Gastrocnemius medialis (tissue), 4 donors: ENCODE measurements at regions of chr16 and their contacts with region 1.

Region 1: DNA sequence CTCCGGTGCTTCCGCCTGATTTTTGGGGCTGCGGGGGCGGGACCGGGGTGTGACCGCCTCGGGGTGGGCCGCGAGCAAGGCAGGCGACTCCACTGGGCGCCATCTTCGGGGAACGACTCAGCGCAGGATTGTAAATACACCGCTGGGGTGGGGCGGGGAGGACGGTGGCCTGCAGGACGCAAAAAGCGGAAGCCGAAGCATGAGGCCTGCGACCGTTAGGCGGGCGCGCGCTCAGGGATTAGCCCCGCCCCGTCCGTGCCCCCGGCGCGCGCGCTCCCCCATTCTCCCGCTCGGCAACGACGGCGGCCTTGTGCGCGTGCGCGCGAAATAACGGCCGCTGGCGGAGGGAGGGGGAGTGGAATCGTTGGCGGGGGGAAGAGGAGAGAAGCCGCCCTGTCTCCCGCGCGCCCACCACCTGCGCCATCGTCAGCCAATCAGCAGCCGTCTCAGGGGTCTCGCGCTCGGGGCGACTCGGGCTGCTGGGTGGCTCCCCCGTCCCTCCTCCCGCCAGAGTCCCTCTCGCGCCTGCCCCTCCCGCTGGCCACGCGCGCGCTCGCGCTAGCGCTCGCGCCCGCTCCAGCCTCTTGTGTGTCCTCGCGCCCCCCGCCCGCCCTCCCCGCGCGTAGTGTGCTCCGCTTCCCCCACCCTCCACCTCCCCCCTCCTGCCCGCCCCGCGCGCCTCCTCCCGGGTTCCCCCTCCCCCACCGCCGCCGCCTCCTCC is 791 bp upstream of the MAZ start:
- DNase-seq: peak; percentile 97
- ATAC-seq: peak; percentile 74 to 75
- H3K4me3 ChIP-seq: peak overlapping the region; percentile 61 to 92 (median 80)
- H3K27ac ChIP-seq: peak overlapping the region; percentile 87 to 99 (median 96)
- H3K4me1 ChIP-seq: peaks cover 41 to 44% of the 10 kb centered on the region in 2 donors
- H3K27me3 ChIP-seq: no peaks in the 10 kb centered on the region
- CTCF ChIP-seq: peak in 1 of 5 experiments; percentile 39
- POLR2A ChIP-seq: peak; percentile 93 to 95

Region 2: GRCh38 chr16:28974437-28975157 is 830.9 kb before region 1 on chr16 and contains the start of gene SPNS1:
- in situ Hi-C with region 1: no loop called
- intact Hi-C with region 1: loop called (anchors 10 kb)
- DNase-seq: peak; percentile 97
- ATAC-seq: peak; percentile 95 to 97
- H3K4me3 ChIP-seq: peak within 1 kb of the TSS; percentile 90 to 98 (median 95)
- H3K27ac ChIP-seq: peak within 1 kb of the TSS; percentile 81 to 89 (median 84)
- H3K4me1 ChIP-seq: peaks cover 14 to 20% of the 10 kb centered on the region in 2 donors
- H3K27me3 ChIP-seq: no peaks in the 10 kb centered on the region
- CTCF ChIP-seq: peak in 1 of 5 experiments; percentile 36
- POLR2A ChIP-seq: peak; percentile 23 to 45
- total RNA-seq, gene SPNS1: 12.7 to 26.0 (median 23.4) TPM

Region 3: GRCh38 chr16:29645694-29646187 is 159.8 kb before region 1 on chr16:
- in situ Hi-C with region 1: no loop called
- intact Hi-C with region 1: no loop called
- DNase-seq: no peak
- ATAC-seq: no peak
- H3K4me3 ChIP-seq: no peak overlapping the region
- H3K27ac ChIP-seq: no peak overlapping the region
- H3K4me1 ChIP-seq: no peaks in the 10 kb centered on the region
- H3K27me3 ChIP-seq: no peaks in the 10 kb centered on the region
- CTCF ChIP-seq: no peak
- POLR2A ChIP-seq: no peak

Region 4: DNA sequence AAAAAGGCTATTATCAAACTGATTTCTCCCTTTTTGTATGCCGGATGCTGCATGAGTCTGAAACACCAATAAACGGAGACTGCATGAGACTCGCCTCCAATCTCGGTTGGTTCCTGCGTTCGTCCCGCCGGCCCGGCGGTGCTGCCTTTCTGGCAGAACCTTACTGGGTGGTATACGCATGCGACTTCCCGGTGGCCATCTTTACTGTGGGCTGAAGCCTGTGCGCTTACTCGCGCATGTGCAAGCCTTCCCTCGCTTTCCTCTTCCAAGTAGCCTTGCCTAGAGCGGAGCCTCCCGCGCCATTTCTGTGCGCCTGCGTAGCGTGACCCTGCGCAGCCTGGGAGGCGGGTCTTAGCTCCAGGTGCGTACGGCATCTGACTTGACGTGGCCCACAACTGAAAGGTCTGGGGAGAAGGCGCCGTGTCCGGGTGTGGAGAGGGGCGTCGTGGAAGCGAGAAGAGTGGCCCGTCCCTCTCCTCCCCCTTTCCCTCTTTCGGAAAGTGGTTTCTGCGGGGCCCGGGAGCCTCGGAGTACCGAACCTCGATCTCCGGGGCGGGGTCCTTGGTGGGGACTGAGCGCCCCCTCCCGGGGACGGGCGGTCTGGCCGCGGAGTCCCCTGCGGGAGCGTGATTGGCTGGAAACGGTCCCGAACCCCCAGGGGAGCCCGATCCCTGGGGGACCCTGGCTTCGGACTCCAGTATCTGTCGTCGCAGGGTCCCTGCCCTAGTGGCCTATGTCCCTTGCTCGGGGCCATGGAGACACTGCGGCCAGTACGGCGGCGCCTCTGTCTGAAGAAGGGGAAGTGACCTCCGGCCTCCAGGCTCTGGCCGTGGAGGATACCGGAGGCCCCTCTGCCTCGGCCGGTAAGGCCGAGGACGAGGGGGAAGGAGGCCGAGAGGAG is 10.5 kb after region 1 on chr16 and contains the start of gene PAGR1:
- in situ Hi-C with region 1: no loop called
- intact Hi-C with region 1: loop called (anchors 1 kb)
- DNase-seq: peak; percentile 98 to 99
- ATAC-seq: peak; percentile 79 to 83
- H3K4me3 ChIP-seq: peak within 1 kb of the TSS; percentile 78 to 96 (median 90)
- H3K27ac ChIP-seq: peak within 1 kb of the TSS; percentile 91 to 99 (median 95)
- H3K4me1 ChIP-seq: peaks cover 44 to 53% of the 10 kb centered on the region in 2 donors
- H3K27me3 ChIP-seq: no peaks in the 10 kb centered on the region
- CTCF ChIP-seq: peak; percentile 95 to 97 (median 95)
- POLR2A ChIP-seq: peak; percentile 66 to 72
- total RNA-seq, gene PAGR1: 15.5 to 29.2 (median 21.7) TPM

Region 5: DNA sequence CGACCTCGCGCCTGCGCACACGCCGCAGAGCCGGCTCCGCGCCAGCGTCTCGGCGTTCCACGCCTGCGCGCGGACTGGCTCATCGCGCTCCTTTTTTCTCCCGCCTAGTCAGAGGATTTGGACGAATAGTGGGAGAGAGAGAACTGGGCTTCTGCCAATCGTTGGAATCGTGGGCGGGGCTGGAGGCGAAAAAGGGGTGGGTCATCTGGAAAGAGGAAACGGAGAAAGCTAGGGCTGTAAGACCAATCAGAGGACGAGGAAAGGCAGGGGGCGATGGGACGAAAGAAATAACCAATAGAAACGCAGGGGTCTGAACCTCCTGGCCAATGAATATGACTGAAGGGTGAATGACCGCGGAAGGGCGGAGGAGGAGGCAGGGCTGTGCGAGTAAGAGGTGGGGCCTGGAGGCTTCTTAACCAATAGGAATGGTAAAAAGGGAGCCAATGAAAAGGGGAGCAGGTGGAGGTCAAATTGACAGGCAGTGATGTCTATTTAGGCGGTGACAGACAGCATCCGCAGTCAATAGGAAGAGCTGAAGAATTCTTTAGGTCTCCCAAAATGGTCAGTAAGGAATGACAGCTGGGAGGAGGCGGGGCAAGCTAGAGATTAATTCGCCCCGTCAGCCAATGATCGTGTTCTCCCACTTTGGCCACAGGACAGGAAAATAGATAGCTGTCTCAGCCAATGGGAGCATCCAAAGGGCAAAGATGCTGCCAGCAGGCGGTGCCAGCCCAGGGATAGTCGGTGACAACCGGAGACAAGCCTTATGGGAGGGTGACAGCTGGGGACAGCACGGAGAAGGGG is 565.1 kb after region 1 on chr16 and contains the start of gene TBC1D10B:
- in situ Hi-C with region 1: no loop called
- intact Hi-C with region 1: loop called (anchors 5 kb)
- DNase-seq: peak; percentile 99 to 100
- ATAC-seq: peak; percentile 83 to 87
- H3K4me3 ChIP-seq: peak within 1 kb of the TSS; percentile 65 to 78 (median 74)
- H3K27ac ChIP-seq: peak within 1 kb of the TSS; percentile 90 to 99 (median 96)
- H3K4me1 ChIP-seq: peaks cover 41 to 64% of the 10 kb centered on the region in 2 donors
- H3K27me3 ChIP-seq: no peaks in the 10 kb centered on the region
- CTCF ChIP-seq: peak in 1 of 5 experiments; percentile 14
- POLR2A ChIP-seq: no peak
- total RNA-seq, gene TBC1D10B: 35.3 to 52.6 (median 43.6) TPM